ENCODE measurements at regions of chr12 and their contacts with region 1.

Region 1: DNA sequence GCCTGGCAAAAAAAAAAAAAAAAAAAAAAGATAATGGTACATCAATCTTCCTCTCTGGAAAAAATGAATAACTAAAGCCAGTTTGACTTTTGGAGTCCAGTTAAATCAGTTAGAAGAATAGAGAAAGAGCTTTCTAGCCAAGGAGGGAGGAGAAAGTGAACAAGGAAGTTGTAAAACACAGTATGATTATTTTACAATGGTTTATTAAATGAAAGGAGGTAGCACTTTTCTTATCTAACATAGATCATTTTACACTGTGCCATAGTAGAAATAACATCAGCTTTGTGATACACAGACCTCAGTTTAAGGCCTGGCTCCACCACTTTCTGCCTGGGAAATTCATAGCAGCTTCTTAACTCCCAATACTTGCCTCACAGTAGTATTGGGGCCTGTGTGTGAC is 15.4 kb upstream of the KITLG start:
- DNase-seq: no peak
- H3K4me3 ChIP-seq: no peak overlapping the region
- H3K27me3 ChIP-seq: no peaks in the 10 kb centered on the region
- CTCF ChIP-seq: no peak

Region 2: GRCh38 chr12:88681051-88681670 is 85.5 kb after region 1 on chr12:
- CTCF ChIA-PET with region 1: no interaction called
- POLR2A ChIA-PET with region 1: no interaction called
- DNase-seq: no peak
- H3K4me3 ChIP-seq: no peak overlapping the region
- H3K27me3 ChIP-seq: no peaks in the 10 kb centered on the region
- CTCF ChIP-seq: no peak

Region 3: GRCh38 chr12:88946372-88946997 is 350.8 kb after region 1 on chr12:
- CTCF ChIA-PET with region 1: no interaction called
- POLR2A ChIA-PET with region 1: interaction called, 14 read pairs
- DNase-seq: peak; percentile 64
- H3K4me3 ChIP-seq: no peak overlapping the region
- H3K27me3 ChIP-seq: no peaks in the 10 kb centered on the region
- CTCF ChIP-seq: peak; percentile 18

Region 4: DNA sequence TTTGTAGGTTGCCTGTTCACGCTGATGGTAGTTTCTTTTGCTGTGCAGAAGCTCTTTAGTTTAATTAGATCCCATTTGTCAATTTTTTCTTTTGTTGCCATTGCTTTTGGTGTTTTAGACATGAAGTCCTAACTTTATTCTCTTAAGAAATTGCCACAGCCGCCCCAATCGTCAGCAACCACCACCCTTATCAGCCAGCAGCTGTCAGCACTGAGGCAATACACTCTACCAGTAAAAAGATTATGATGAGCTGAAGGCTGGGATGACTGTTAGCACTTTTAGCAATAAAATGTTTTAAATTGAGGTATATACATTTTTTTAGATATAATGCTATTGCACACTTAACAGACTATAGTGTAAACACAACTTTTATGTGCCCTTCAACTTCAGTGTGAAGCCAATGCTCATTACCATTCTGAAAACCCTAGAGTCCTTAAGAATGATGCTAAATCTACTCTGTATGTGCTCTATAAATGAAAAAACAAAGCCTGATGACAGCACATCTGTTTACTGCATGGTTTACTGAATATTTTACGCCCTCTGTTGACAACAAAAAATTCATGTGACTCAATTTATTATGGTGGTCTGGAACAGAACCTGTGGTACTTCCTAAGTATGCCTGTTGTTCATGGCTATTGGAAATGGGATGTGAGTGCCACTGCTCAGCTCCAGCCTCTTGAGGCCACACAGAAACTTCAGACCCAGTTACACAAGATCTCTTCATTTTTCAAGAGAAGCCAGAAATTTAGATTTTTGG is 559.2 kb after region 1 on chr12:
- CTCF ChIA-PET with region 1: no interaction called
- POLR2A ChIA-PET with region 1: no interaction called
- DNase-seq: no peak
- H3K4me3 ChIP-seq: no peak overlapping the region
- H3K27me3 ChIP-seq: no peaks in the 10 kb centered on the region
- CTCF ChIP-seq: no peak

Measured in BJ (cell line).